ENCODE measurements at regions of chr14 and their contacts with region 1.

Region 1: GRCh38 chr14:56474419-56475022 is 105.1 kb upstream of the TMEM260 start:
- DNase-seq: no peak
- ATAC-seq: peak; percentile 56

Region 2: DNA sequence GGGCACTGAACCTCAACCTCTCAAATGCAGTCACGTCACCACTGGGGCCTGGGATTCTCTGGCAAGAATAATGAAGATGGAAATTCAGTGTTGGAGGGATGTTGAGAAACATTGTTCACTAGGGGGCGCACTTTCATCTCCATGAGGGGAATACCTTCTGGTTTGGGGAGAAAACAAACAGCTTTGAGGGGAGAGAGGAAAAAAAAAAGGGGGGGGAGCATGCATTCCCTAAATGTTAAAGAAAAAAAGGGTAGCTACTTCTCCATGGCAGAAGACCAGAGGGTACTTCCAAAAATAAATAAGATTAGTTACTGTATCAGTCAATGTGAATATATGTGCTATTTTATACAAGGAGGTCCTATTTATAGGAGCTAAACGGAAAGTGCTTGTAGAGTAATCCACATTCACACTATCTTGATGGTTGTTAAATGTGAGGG is 1028.3 kb before region 1 on chr14:
- intact Hi-C with region 1: loop called (anchors 10 kb)
- DNase-seq: no peak
- ATAC-seq: peak; percentile 78

Region 3: GRCh38 chr14:55707365-55707804 is 767.1 kb before region 1 on chr14:
- intact Hi-C with region 1: loop called (anchors 10 kb)
- DNase-seq: no peak
- ATAC-seq: peak; percentile 72

Measured in sciatic nerve (tissue), 2 donors.